Activated naive CD4-positive, alpha-beta T cell treated with anti-CD3 and anti-CD28 coated beads for 36 hours (primary cell): ENCODE measurements at regions of chr19 and their contacts with region 1.

Region 1: DNA sequence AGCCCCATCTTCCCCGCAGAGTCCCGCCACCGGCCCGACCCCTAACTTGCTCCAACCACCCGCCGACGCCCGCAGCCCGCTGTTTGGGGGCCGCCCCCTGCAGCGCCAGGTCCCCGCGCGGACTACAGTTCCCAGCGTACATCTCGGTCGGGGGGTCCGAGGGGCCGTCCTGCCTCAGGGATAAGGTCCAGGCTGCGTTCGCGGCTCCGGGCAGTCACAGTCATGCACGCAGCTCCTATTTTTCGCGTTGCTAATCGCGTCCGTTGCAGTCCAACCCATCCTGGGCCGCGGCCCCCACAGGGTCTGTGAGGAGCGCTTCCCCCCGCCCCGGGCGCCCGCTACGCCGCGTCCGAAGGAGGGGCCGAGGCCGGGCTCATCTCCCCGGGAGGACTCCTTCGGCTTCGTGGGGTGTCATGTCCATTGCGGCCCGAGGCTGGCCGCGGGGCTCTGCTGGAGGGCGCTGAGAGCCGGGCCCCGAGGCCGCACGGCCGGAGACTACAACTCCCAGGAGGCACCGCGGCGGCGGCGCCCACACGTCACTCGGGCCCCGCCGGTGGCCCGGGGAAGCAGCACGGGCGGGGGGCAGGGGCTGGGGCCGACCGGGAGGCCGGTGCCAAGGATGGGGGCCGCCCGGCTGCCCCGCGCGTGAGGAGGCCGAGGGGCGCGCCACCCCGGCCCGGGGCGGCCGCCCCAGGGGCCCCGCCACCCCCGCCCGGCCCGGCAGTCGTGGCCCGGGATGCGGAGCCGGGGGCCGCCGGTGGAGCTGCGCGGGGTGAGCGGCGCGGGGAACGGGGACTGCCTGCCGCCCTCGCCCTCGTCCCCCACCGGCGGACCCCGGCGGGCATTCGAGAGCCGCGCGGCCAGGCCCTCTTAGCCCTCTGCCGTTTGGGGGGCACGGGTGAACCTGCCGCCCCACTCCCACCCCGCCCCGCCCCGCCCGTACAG is at the start of gene MAP3K10:
- DNase-seq: peak; percentile 79
- H3K4me3 Mint-ChIP-seq: peak within 1 kb of the TSS; percentile 85
- H3K27ac Mint-ChIP-seq: peak within 1 kb of the TSS; percentile 91
- H3K4me1 Mint-ChIP-seq: peaks cover 30% of the 10 kb centered on the region
- H3K27me3 Mint-ChIP-seq: no peaks in the 10 kb centered on the region
- total RNA-seq, gene MAP3K10: 8.4 to 9.3 TPM

Region 2: GRCh38 chr19:40221858-40222837 is 31.0 kb after region 1 on chr19:
- CTCF ChIA-PET with region 1: interaction called, 3 read pairs
- intact Hi-C with region 1: loop called (anchors 2 kb)
- DNase-seq: peak; percentile 86
- H3K4me3 Mint-ChIP-seq: no peak overlapping the region
- H3K27ac Mint-ChIP-seq: no peak overlapping the region
- H3K4me1 Mint-ChIP-seq: peaks cover 22% of the 10 kb centered on the region
- H3K27me3 Mint-ChIP-seq: peaks cover 67% of the 10 kb centered on the region